Dorsolateral prefrontal cortex (tissue), 120 donors: ENCODE measurements at regions of chr12 and their contacts with region 1.

Region 1: DNA sequence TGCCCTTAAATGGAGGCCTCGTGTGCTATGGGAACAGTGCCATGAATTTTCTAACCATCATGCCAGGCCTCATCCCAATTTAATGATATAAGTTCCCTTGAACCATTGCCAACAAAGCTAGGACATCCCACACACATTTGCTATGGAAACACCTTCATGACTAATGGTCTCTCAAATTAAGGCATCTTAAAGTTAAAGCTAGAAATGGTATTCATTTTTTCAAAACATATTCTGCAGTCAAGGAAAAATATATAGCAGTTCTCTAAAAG is 117.3 kb downstream of the BTG1 start:
- DNase-seq: peak in 1 of 10 donors; percentile 25
- H3K4me3 ChIP-seq: no peak overlapping the region
- H3K27ac ChIP-seq: peak overlapping the region in 45 of 59 donors; percentile 5 to 88 (median 60)
- H3K27me3 ChIP-seq: no peaks in the 10 kb centered on the region
- CTCF ChIP-seq: no peak

Region 2: GRCh38 chr12:91877022-91877421 is 151.4 kb before region 1 on chr12:
- intact Hi-C with region 1: no loop called
- DNase-seq: peak in 2 of 10 donors; percentile 44 to 45
- H3K4me3 ChIP-seq: no peak overlapping the region
- H3K27ac ChIP-seq: no peak overlapping the region
- H3K27me3 ChIP-seq: no peaks in the 10 kb centered on the region
- CTCF ChIP-seq: no peak

Region 3: DNA sequence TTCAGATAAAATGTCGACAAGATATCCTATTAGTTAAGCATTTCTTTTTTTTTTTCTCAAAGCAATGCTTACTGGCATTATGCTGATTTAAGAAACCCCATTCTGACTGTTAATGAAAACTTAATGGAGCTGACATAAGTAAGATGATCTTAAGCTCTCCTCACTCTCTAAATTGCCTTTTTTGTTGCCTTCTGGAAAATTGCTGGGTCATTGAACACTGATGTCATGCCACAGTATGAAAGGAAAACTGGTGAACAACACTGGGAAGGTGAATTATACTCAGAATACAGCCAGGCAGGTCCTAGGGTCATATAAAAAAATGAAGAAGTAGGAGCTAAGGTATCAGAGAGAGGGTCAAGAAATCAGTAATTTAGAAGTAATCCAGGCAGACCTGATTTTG is 62.6 kb before region 1 on chr12:
- intact Hi-C with region 1: no loop called
- DNase-seq: no peak
- H3K4me3 ChIP-seq: no peak overlapping the region
- H3K27ac ChIP-seq: no peak overlapping the region
- H3K27me3 ChIP-seq: no peaks in the 10 kb centered on the region
- CTCF ChIP-seq: no peak

Region 4: DNA sequence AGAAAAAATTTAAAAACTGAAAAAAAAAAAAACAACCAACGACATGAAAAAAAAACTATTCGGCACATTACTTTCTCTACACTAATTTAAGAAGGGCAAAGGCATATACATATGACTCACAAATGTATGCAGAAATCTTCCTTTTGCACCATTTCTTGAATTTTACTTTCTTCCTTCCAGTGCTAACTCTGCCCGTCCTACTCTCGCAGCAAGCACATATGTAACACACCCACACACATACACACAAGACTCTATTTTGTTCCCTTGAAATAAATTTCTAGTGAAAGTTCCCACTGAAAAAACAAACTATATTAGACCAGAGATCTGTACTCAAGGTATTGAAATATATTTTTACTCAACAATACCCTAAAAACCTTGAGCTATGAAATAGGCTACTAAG is 102.6 kb after region 1 on chr12:
- intact Hi-C with region 1: loop called in 1 of 2 experiments (anchors 2 kb)
- DNase-seq: no peak
- H3K4me3 ChIP-seq: peak overlapping the region in 2 of 59 donors; percentile 3 to 13
- H3K27ac ChIP-seq: peak overlapping the region in 36 of 59 donors; percentile 1 to 82 (median 42)
- H3K27me3 ChIP-seq: no peaks in the 10 kb centered on the region
- CTCF ChIP-seq: no peak